Posterior cingulate gyrus (tissue), 11 donors: ENCODE measurements at regions of chr12 and their contacts with region 1.

Region 1: DNA sequence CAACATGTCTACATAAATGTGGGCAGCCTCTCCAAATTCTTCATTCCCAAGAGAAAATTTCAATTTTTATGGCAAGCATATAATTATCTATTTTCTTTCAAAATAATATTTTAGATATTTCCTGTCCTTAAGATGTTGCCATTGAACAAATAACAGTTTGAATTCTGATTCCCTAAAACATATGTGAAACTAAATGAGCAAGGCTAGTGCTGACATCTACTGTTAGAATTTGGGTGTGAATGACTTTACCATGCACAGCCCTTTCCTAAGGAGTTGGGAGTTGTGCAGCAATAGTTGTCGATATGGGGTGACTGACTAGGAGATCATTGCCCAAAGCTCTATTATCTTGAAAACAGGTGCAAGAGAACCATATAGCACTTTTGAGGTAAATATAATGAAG is 108.2 kb upstream of the SLC38A4 start:
- DNase-seq: no peak

Region 2: GRCh38 chr12:46153268-46153872 is 780.6 kb before region 1 on chr12:
- intact Hi-C with region 1: loop called (anchors 10 kb)
- DNase-seq: no peak

Region 3: GRCh38 chr12:46364777-46365580 is 569.0 kb before region 1 on chr12:
- intact Hi-C with region 1: loop called (anchors 10 kb)
- DNase-seq: peak in 2 of 10 donors; percentile 22 to 49

Region 4: DNA sequence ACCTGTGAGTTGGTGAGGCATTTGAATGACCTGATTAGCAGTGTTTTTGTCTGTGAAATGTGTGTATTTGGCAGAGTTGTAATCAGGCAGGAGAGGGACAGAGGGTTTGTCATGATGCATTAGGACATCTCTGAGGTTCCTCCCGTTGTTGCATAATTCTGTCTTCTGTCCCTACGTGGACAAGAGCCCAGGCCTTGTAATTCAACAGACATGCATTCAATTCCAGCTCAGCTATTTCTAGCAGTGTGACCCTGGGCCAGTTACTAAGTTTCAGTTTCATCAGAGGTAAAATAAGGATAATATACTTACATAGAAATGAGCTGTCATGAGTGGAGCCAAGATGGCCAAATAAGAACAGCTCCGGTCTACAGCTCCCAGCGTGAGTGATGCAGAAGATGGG is 316.8 kb before region 1 on chr12:
- intact Hi-C with region 1: no loop called
- DNase-seq: no peak

Region 5: GRCh38 chr12:46675736-46676135 is 258.2 kb before region 1 on chr12:
- intact Hi-C with region 1: loop called (anchors 10 kb)
- DNase-seq: no peak

Region 6: DNA sequence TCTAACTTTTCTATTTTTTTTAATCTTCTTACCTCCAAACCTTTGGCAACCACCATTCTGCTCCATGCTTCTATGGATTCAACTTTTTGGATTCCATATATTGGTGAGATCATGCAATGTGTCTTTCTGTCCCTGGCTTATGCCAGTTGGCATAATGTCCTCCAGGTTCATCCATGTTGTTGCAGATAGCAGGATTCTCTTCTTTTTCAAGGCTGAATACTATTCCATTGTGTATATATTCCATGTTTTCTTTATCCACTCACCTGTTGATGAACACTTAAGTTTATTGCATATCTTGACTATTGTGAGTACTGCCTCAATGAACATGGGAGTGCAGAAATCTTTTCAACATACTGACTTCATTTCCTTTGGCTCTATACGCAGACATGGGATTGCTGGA is 86.9 kb before region 1 on chr12:
- intact Hi-C with region 1: no loop called
- DNase-seq: no peak

Region 7: DNA sequence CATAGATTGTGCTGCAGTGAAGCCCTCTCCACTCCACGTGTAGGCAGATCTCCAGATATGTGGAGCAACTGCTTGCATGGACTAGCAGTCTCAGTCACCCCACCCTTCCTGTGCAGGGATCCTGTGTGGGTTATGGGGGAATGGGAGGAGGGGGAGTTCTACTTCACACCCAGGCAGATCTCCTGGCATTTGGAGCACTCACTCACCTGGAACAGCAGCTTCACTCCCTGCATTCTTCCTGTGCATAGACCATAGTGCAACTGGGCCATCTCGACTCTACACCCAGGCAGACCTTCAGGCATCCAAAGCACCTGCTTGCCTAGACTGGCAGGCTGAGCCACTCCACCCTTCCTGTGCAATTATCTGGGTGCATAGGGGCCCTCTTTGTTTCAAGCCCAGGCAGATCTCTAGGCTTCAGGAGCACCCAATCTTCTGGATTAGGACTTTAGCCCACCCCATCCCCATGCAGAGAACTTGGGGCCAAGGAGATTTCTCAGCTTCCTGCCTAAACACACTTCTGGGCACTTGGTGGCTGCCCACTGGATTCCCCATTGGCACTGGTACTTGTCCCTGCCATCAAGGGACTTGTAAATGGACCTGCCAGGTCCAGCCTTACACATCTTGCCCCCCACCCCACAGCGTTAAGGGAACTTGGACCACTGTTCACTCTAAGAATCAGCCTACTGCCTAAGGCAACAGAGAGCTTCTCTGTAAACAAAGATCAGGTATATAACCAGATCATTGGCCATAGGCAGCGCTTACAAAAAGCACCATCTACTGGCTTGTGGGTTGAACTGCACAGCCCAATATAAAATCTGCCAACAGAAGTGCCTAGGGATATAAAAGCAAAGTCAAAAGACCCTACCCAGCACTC is 49.7 kb after region 1 on chr12:
- intact Hi-C with region 1: no loop called
- DNase-seq: peak in 1 of 10 donors; percentile 12